Mammary epithelial cell (primary cell): ENCODE measurements at regions of chr15 and their contacts with region 1.

Region 1: DNA sequence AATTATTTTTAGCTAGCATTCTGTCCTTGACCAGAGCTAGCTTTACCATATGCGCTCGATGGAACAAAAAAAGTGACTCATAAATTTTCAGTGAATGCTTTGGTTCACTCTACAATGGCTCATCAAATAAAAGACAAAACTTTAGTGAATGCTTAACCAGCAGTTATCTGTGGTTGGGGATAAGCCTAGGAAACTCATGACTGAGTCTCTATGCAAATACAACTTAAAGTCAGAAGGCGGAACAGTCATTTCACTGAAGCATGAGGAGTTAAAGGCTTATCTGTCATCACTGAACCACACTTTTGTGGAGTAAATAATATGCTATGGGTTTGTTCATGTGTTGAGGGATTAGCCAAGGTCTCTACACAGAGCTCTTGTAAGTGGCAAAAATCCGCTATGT is 308.4 kb downstream of the SQOR start:
- DNase-seq: no peak
- H3K4me3 ChIP-seq: no peak overlapping the region
- H3K27ac ChIP-seq: no peak overlapping the region
- H3K4me1 ChIP-seq: no peaks in the 10 kb centered on the region
- H3K27me3 ChIP-seq: no peaks in the 10 kb centered on the region
- CTCF ChIP-seq: no peak

Region 2: DNA sequence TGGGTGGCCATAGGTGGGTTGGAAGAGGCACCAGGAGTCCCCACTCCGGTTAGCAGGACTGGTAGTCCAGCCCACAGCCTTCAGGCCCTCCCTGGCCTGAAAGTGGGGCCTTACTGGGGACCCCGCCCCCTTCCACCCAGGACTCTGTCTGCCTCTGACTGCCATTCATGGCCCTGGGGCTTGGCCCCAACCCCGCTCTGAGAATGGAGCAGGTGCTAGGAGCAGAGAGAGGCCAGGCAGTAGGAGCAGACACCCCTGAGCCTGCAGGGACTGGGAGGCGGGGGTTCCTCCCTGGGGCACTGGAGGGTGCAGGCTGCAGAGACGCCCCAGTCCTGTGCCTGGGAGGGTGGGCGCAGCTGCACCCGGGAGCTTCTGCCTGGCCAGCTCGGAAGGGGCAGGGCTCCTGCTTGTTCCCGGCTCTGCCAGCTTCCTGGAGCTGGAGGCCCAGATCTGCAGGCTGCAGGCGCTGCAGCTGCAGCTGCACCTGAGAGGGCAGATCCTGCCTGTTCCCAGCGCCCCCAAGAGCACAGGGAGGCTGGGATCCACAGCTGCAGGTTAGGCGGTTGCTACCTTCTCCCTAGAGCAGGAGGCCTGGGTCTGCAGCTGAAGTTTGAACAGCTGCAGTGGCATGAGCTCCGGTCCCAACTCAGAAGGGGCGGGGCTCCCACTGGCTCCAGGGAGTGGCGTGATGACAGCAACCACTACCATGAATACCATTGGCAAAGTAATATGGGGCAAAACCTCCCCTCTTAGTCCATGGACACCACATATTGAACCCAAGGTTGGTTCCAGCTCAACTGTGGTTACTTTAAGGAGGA is 113.7 kb before region 1 on chr15:
- CTCF ChIA-PET with region 1: no interaction called
- dilution Hi-C with region 1: no loop called
- in situ Hi-C with region 1: no loop called
- intact Hi-C with region 1: loop called (anchors 10 kb)
- DNase-seq: no peak
- H3K4me3 ChIP-seq: no peak overlapping the region
- H3K27ac ChIP-seq: no peak overlapping the region
- H3K4me1 ChIP-seq: no peaks in the 10 kb centered on the region
- H3K27me3 ChIP-seq: peaks cover 3% of the 10 kb centered on the region
- CTCF ChIP-seq: no peak